ENCODE measurements at regions of chr4 and their contacts with region 1.

Region 1: DNA sequence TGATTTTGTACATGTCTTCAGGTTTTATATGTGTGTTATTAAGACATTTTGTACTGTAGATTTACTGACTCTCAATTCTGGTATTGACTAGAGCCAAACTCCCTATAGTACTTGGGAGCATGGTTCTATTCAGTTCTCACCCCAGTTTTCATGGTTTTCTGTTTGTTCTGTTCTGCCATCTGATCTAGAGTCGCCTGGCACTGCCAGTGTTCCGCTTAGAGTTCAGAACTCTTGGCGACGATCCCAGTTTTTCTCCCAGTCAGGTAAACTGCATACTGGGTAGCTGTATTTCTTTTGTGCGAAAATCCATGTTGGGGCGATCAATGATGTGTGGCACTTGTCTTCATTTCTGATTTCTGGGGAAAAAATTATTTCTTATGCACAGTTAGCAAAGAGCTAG is 78.0 kb downstream of the PHOX2B start:
- DNase-seq: no peak

Region 2: GRCh38 chr4:40427128-40427527 is 1243.4 kb before region 1 on chr4:
- intact Hi-C with region 1: loop called in 1 of 2 experiments (anchors 5 kb)
- DNase-seq: no peak

Region 3: DNA sequence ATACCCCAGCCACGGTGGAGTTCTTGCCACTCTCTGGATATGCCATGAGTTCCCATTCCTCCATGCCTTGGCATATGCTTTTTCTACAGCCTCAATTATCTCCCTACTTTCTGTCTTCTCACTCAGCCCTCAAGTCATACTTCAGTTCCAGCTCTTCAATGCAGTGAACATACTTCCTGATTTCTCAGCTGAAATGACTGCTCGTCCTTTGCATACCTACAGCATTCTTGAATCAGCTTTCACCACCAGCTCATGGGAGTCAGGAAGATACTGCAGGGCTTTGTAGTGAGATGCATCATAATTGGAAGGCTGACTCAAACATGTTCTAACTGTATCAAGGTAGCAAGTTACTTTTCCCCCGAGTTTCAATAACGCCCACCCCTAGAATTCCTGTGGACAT is 574.6 kb before region 1 on chr4:
- intact Hi-C with region 1: no loop called
- DNase-seq: no peak

Region 4: DNA sequence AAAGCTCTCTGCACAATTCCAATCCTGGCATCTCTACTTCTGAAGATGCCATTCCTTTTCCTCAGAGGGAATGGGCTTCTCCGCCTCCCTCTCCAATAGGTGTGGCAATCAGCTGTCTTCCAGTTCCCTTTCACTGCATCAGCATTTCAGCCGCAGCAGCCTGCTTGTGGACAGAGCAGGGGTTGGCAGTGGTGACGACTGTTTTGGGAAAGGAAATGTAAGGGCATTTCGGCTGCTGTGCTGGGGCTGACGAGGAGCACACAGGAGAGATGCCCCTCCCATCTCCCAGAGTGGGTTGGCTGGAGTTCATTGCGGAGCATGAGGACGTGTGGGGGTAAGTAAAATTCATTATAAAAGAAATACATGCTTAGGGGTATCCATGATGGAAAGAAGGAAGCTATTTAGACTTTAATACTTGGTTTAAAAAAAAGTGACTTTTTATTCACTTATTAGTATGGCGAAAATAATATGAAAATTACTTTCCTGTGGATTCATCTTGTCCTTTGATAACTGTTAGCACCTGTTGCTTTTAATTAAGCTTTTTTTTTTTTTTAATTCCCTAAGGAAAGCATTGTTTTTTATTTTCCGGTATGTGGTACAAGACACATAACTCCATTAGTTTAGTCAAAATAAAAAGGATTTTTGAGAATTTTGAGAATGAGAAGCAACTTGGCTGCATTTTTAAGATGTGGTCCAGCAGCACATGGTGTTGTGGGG is 132.4 kb before region 1 on chr4 and contains the start of gene LIMCH1:
- intact Hi-C with region 1: no loop called
- DNase-seq: peak; percentile 90
- total RNA-seq, gene LIMCH1: 38.7 to 68.0 TPM